Panc1 (cell line): ENCODE measurements at regions of chr3 and their contacts with region 1.

Region 1: GRCh38 chr3:197906023-197906849 is 43.8 kb upstream of the RPL35A start:
- DNase-seq: peak; percentile 75
- ATAC-seq: peak; percentile 98
- H3K4me3 ChIP-seq: no peak overlapping the region
- H3K27ac ChIP-seq: peak overlapping the region; percentile 30
- H3K4me1 ChIP-seq: peaks cover 8% of the 10 kb centered on the region; the same call in 1 of the 2 replicates
- H3K27me3 ChIP-seq: no peaks in the 10 kb centered on the region
- CTCF ChIP-seq: peak; percentile 99

Region 2: DNA sequence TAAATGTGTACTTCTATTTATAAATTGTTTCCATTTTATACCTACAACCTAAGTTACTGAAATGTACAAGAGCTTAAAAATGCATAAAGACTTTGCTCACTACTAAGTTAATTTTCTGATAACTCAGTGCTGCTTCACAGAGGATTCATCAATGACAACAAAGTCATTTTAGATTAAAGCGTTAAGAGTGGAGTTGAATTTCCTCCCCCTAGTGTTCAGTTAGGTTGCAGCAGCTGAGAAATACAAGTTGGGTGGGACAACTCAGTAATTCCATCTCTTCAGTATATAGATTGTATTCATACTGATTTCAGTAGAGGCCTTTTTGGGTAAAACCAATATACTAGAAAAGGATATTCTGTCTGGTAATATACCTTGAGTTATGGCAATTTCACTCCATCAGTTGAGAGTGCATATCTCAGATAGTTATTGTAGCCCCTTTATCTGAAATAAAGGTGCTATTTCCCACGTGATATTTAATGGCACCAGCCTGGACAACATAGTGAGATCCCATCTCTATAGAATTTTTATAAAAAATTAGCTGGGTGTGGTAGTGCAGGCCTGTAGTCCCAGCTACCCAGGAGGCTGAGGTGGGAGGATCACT is 36.8 kb after region 1 on chr3:
- CTCF ChIA-PET with region 1: interaction called, 16 read pairs
- POLR2A ChIA-PET with region 1: no interaction called
- in situ Hi-C with region 1: no loop called
- intact Hi-C with region 1: loop called (anchors 1 kb)
- DNase-seq: no peak
- ATAC-seq: peak; percentile 86
- H3K4me3 ChIP-seq: no peak overlapping the region
- H3K27ac ChIP-seq: no peak overlapping the region
- H3K4me1 ChIP-seq: no peaks in the 10 kb centered on the region
- H3K27me3 ChIP-seq: no peaks in the 10 kb centered on the region
- CTCF ChIP-seq: peak; percentile 84; the same call in 1 of the 2 replicates

Region 3: GRCh38 chr3:198080521-198081280 is 174.5 kb after region 1 on chr3:
- CTCF ChIA-PET with region 1: interaction called, 3 read pairs
- POLR2A ChIA-PET with region 1: no interaction called
- in situ Hi-C with region 1: no loop called
- intact Hi-C with region 1: loop called (anchors 1 kb)
- DNase-seq: no peak
- ATAC-seq: peak; percentile 96
- H3K4me3 ChIP-seq: peak overlapping the region; percentile 53 to 74
- H3K27ac ChIP-seq: peak overlapping the region; percentile 63; the same call in 1 of the 2 replicates
- H3K4me1 ChIP-seq: peaks cover 6% of the 10 kb centered on the region
- H3K27me3 ChIP-seq: peaks cover 33% of the 10 kb centered on the region
- CTCF ChIP-seq: peak; percentile 97